ENCODE measurements at regions of chr12 and their contacts with region 1.

Region 1: DNA sequence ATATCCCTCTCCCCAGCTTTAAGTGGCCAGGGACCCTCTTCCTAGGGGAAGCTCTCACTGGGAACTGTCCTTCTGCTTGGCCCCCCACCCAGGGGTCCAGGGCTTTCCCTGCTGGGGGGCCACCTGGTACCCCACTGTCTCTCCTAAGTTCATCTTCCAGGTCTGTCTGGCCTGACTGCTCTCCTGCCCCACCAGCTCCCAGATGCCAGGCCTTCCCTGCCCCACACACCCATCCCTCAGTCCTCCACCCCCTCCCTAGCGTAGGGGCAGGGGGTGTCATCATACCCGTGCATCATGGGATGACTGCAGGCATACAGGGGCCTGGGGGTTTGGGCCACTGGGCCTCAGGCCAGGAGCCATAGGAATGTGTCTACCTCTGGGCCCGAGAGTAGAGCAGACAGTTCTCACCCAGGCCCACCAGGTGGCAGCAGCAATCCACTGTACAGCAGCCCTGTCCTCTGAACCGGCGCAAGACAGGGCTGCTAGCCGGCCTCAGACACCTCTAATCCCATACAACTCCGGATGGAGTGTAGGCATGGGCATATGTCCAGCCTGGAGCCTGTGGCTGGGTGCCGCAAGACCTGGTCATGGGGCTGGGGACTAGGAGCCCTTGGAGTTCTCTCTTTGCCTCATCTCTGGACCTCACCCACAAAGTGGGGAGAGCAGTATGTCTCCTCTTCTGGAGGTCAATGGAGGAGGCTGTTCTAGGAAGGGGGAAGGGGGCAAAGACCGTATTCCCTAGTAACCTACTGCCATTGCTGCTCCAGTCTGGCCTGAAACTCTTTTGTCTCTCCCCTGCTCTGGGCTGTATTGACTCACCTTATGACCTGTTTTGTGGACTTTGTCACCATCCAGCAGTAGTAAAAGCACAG is 10.0 kb upstream of the SMARCD1 start:
- DNase-seq: peak; percentile 88 to 96
- ATAC-seq: peak; percentile 90
- H3K4me3 ChIP-seq: no peak overlapping the region
- H3K27ac ChIP-seq: no peak overlapping the region
- H3K4me1 ChIP-seq: no peaks in the 10 kb centered on the region
- H3K27me3 ChIP-seq: no peaks in the 10 kb centered on the region

Region 2: GRCh38 chr12:49967042-49967776 is 108.0 kb before region 1 on chr12:
- intact Hi-C with region 1: loop called (anchors 2 to 5 kb)
- DNase-seq: peak; percentile 95 to 98
- ATAC-seq: peak; percentile 93
- H3K4me3 ChIP-seq: no peak overlapping the region
- H3K27ac ChIP-seq: no peak overlapping the region
- H3K4me1 ChIP-seq: no peaks in the 10 kb centered on the region
- H3K27me3 ChIP-seq: no peaks in the 10 kb centered on the region

Region 3: DNA sequence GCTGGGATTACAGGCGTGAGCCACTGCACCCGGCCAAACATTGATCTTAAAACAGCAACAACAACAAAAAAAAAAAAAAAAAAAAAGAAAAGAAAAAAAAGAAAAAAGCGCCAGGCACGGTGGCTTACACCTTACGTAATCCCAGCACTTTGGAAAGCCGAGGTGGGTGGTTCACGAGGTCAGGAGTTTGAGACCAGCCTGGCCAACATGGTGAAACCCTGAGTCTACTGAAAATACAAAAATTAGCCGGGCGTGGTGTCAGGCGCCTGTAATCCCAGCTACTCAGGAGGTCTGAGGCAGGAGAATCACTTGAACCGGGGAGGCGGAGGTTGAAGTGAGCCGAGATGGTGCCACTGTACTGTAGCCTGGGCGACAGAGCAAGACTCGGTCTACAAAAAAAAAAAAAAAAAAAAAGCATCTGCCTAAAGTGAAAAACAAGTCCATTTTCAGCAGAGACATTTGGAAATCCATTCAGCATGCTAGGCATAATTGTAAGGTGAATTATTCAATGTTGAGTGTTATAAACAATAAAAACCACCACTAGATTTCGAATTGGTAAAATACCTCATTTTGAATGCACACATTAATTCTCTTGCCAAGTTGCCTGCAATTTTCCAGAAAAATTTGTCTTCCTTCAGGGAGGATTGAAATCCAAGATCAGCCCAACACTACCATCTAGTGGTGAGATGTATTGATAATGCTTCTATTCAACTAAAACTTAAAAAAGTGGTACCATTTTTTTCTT is 100.0 kb after region 1 on chr12:
- intact Hi-C with region 1: loop called (anchors 2 to 5 kb)
- DNase-seq: no peak
- ATAC-seq: peak; percentile 67
- H3K4me3 ChIP-seq: no peak overlapping the region
- H3K27ac ChIP-seq: no peak overlapping the region
- H3K4me1 ChIP-seq: no peaks in the 10 kb centered on the region
- H3K27me3 ChIP-seq: no peaks in the 10 kb centered on the region

Region 4: DNA sequence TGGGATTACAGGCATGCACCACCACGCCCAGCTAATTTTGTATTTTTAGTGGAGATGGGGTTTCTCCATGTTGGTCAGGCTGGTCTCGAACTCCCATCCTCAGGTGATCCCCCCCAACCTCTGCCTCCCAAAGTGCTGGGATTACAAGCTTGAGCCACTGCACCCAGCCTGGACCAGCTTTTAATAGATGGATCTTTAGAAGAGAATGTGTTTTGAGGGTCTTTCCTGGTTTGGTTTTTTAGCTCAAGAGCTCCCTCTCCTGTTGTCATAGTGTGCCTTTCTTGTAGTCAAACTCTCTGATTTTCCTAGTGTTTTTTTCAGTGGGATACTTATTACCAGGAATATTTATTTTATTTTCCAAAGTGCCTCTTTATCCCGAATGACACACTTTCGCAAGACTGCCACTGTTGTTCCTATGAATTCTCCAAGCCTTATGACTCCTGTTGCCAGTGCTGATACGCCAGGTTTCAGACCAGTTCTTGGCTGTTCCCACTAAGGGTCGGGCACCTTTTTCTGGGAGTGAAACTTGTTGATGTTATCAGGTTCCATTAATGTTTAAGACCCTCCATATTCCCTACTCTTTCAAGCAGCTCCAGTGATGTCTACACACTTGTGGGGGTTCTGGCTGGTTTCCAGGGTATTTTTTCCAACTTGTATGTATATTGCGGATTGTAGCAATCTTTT is 239.6 kb after region 1 on chr12:
- intact Hi-C with region 1: loop called (anchors 5 to 10 kb)
- DNase-seq: no peak
- ATAC-seq: no peak
- H3K4me3 ChIP-seq: no peak overlapping the region
- H3K27ac ChIP-seq: no peak overlapping the region
- H3K4me1 ChIP-seq: no peaks in the 10 kb centered on the region
- H3K27me3 ChIP-seq: no peaks in the 10 kb centered on the region

Measured in aorta (tissue), 5 donors.